Activated CD4-positive, alpha-beta memory T cell treated with anti-CD3 and anti-CD28 coated beads for 36 hours (primary cell): ENCODE measurements at regions of chr11 and their contacts with region 1.

Region 1: DNA sequence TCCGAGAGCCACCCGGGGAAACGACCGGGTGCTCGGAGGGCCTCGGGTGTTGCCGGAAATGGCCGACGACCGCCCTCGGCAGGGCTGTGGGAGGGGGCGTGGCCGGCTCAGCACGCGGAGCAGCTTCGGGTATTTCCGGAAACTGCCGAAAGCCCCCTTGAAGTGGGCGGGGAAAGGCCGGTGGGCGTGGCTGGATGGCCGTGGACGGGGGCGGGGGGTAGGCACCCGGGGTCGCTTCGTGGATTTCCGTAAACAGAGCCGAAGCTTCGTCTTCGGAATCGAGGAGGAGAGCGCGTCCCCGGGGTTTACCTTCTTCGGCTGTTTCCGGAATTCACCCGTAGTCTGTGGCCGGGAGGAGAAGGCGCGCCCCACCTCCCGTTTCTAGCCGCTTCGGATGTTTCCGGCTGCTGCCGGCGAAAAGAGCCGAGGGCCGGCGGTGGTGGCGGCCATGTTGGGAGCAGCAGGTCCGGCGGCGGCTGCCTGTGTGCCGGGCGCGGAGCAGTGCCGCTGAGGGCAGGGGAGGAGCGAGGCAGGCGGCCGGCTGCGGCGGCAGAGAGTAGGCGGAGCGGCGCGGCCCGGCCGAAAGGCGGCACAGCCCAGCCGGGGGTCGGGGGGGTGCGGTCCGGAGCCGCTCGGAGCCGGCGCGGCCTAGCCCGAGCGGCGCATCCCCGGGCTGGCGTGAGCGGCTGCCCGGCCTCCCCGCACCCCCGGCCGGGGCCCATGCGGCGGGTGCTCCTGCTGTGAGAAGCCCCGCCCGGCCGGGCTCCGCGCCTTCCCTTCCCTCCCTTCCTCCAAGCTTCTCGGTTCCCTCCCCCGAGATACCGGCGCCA is at the start of gene MARK2:
- DNase-seq: peak; percentile 100
- H3K4me3 Mint-ChIP-seq: peak within 1 kb of the TSS; percentile 89
- H3K27ac Mint-ChIP-seq: peak within 1 kb of the TSS; percentile 81
- H3K4me1 Mint-ChIP-seq: peaks cover 45% of the 10 kb centered on the region
- H3K27me3 Mint-ChIP-seq: no peaks in the 10 kb centered on the region
- total RNA-seq, gene MARK2: 20.0 to 29.0 TPM

Region 2: GRCh38 chr11:63573881-63574855 is 264.7 kb before region 1 on chr11:
- CTCF ChIA-PET with region 1: no interaction called
- POLR2A ChIA-PET with region 1: no interaction called
- intact Hi-C with region 1: no loop called
- DNase-seq: peak; percentile 55
- H3K4me3 Mint-ChIP-seq: peak overlapping the region; percentile 66
- H3K27ac Mint-ChIP-seq: peak overlapping the region; percentile 58
- H3K4me1 Mint-ChIP-seq: peaks cover 19% of the 10 kb centered on the region
- H3K27me3 Mint-ChIP-seq: no peaks in the 10 kb centered on the region

Region 3: DNA sequence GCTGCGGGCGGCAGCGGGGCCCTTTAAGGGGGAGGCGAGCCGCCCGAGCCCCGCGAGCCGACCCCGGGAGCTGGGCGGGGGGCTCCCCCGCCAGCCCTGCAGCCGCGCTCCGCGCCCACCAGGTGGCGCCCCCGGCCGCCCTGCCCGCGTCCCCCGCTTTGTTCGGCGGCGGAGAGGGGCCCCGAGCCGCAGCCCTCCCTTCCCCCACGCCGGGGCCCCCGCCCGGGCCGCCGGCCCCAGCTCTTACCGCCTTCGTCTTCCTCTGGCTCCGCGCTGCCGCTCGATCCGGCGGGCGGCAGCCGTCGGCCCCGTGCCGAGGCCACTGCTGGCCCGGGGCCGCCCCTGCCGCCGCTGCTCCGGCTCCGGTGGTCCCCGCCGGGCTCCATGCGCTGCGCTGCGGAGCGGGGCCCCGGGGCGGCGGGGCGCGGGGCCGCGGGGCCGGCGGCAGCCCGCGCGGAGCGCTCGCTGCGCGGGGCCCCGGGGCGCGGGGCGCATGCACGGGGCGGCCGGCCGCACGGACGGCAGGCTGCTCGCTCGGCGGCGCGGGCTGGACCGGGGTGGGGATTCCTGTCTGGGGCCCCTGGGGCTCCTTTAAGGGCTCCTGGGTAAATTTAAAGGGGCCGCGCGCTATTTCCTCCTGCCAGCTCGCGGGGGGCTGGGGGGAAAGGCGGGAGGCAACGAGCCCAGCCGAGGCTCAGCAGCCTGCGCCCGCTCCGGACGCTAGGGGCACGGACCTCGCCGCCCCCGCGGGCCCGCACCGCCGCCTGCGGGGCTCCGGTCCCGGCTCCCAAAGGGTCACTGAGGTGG is 70.5 kb before region 1 on chr11 and contains the start of gene ZFTA:
- CTCF ChIA-PET with region 1: interaction called, 24 read pairs
- POLR2A ChIA-PET with region 1: no interaction called
- intact Hi-C with region 1: no loop called
- DNase-seq: peak; percentile 65
- H3K4me3 Mint-ChIP-seq: peak within 1 kb of the TSS; percentile 80
- H3K27ac Mint-ChIP-seq: no peak within 1 kb of the TSS
- H3K4me1 Mint-ChIP-seq: peaks cover 6% of the 10 kb centered on the region
- H3K27me3 Mint-ChIP-seq: peaks cover 10% of the 10 kb centered on the region
- total RNA-seq, gene ZFTA: 1.3 to 1.5 TPM

Region 4: GRCh38 chr11:63888170-63889086 is 49.5 kb after region 1 on chr11:
- CTCF ChIA-PET with region 1: interaction called, 26 read pairs
- POLR2A ChIA-PET with region 1: interaction called, 3 read pairs
- intact Hi-C with region 1: loop called (anchors 1 kb)
- DNase-seq: peak; percentile 80
- H3K4me3 Mint-ChIP-seq: peak overlapping the region; percentile 81
- H3K27ac Mint-ChIP-seq: peak overlapping the region; percentile 85
- H3K4me1 Mint-ChIP-seq: peaks cover 70% of the 10 kb centered on the region
- H3K27me3 Mint-ChIP-seq: no peaks in the 10 kb centered on the region

Region 5: GRCh38 chr11:63938479-63939396 is 99.8 kb after region 1 on chr11 and contains the start of gene NAA40:
- CTCF ChIA-PET with region 1: interaction called, 197 read pairs
- POLR2A ChIA-PET with region 1: interaction called, 3 read pairs
- intact Hi-C with region 1: loop called (anchors 1 kb)
- DNase-seq: peak; percentile 95
- H3K4me3 Mint-ChIP-seq: peak within 1 kb of the TSS; percentile 85
- H3K27ac Mint-ChIP-seq: peak within 1 kb of the TSS; percentile 54
- H3K4me1 Mint-ChIP-seq: peaks cover 23% of the 10 kb centered on the region
- H3K27me3 Mint-ChIP-seq: no peaks in the 10 kb centered on the region
- total RNA-seq, gene NAA40: 15.4 to 17.3 TPM

Region 6: DNA sequence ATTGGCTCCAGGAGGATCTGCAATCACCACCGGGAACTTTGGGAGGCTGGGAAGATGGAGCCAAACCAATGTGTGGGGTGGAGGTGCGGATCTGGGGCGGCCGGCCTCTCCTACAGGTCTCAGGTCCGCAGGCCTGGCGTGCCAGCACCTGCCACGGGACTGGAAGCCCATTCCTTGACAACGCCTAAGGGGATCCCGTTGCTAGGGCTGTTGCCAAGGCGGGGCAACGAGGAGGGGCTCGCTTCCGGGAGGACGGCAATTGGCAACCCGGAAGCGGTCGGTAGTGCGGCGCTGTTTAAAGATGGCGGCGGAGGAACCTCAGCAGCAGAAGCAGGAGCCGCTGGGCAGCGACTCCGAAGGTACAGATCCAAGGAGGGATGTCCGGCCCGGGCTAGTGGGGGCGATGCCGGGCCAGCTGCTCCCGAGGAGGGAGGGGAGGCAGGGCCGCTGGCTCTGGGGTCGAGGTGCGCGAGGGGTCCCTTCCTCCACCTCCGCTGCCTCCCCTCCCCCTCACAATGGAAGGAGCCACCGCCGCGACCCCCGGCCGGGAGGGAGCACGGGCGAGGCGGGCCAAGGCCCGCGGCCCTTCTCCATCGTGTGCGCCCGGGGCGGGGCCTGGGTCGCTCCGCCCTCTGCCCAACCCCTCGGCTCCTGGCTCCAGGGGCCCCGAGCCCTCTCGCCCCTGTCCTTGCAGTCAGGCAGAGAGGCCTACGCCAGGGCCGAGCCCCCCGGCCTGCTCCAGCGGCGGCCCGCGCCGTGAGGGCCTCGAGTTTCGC is 147.5 kb after region 1 on chr11 and contains the start of gene OTUB1:
- CTCF ChIA-PET with region 1: interaction called, 3 read pairs
- POLR2A ChIA-PET with region 1: no interaction called
- intact Hi-C with region 1: loop called (anchors 1 kb)
- DNase-seq: peak; percentile 93
- H3K4me3 Mint-ChIP-seq: peak within 1 kb of the TSS; percentile 94
- H3K27ac Mint-ChIP-seq: peak within 1 kb of the TSS; percentile 91
- H3K4me1 Mint-ChIP-seq: peaks cover 20% of the 10 kb centered on the region
- H3K27me3 Mint-ChIP-seq: no peaks in the 10 kb centered on the region
- total RNA-seq, gene OTUB1: 69.5 to 72.2 TPM